Prostate gland (tissue), 2 donors: ENCODE measurements at regions of chr20 and their contacts with region 1.

Region 1: GRCh38 chr20:32336918-32337347 is 21.2 kb upstream of the ASXL1 start:
- DNase-seq: no peak
- H3K4me3 ChIP-seq: no peak overlapping the region
- H3K27ac ChIP-seq: no peak overlapping the region
- H3K4me1 ChIP-seq: no peaks in the 10 kb centered on the region
- H3K27me3 ChIP-seq: no peaks in the 10 kb centered on the region
- CTCF ChIP-seq: peak in 3 of 4 experiments; percentile 31 to 61 (median 54)
- POLR2A ChIP-seq: no peak

Region 2: GRCh38 chr20:31842471-31843157 is 494.3 kb before region 1 on chr20:
- intact Hi-C with region 1: no loop called
- DNase-seq: no peak
- H3K4me3 ChIP-seq: no peak overlapping the region
- H3K27ac ChIP-seq: peak overlapping the region in 1 of 2 donors; percentile 5
- H3K4me1 ChIP-seq: no peaks in the 10 kb centered on the region
- H3K27me3 ChIP-seq: no peaks in the 10 kb centered on the region
- CTCF ChIP-seq: no peak
- POLR2A ChIP-seq: no peak

Region 3: DNA sequence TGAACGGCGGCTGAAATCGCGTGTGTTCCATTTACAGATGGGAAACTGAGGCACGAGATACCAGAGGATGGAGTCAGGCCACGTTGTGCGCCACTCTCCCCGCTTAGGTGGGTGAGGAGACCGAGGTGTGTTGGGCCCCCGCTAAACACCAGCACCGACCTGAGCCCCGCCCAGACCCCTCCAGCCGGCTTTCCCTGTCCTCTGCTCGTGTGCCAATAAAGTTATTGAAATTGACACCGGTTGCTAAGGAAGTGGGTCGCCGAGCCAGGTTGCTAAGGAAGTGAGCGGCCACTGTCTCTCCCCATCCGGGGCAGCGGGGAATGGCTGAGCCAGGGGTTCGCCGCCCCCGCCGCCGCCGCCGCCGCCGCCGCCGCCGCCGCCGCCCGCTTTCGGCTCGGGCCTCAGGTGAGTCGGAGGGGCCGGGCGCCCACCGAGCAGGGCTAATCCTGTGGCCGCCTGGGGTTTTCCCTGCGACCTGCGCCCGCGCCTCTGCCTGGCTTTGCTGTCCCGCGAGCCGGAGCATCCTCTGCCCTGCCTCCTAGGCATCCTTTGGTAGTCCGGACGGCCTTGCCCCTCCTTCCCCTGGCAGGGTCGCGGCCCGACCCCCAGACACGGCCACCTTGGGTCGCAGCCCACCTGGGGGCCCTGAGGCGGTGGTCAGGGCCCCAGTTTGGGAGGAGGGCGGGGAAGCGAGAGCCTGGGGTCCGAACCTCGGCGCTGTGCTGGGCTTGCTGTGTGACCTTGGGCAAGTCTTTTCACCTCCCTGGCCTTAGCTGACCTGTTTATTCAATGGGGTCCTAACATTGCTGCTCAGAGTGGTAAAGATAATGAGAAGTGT is 59.4 kb before region 1 on chr20 and contains the start of gene KIF3B:
- intact Hi-C with region 1: no loop called
- DNase-seq: peak; percentile 84
- H3K4me3 ChIP-seq: peak within 1 kb of the TSS; percentile 81 to 94
- H3K27ac ChIP-seq: peak within 1 kb of the TSS; percentile 61 to 68
- H3K4me1 ChIP-seq: peaks cover 4% of the 10 kb centered on the region
- H3K27me3 ChIP-seq: no peaks in the 10 kb centered on the region
- CTCF ChIP-seq: no peak
- POLR2A ChIP-seq: peak; percentile 38
- total RNA-seq, gene KIF3B: 22.6 to 23.5 TPM

Region 4: DNA sequence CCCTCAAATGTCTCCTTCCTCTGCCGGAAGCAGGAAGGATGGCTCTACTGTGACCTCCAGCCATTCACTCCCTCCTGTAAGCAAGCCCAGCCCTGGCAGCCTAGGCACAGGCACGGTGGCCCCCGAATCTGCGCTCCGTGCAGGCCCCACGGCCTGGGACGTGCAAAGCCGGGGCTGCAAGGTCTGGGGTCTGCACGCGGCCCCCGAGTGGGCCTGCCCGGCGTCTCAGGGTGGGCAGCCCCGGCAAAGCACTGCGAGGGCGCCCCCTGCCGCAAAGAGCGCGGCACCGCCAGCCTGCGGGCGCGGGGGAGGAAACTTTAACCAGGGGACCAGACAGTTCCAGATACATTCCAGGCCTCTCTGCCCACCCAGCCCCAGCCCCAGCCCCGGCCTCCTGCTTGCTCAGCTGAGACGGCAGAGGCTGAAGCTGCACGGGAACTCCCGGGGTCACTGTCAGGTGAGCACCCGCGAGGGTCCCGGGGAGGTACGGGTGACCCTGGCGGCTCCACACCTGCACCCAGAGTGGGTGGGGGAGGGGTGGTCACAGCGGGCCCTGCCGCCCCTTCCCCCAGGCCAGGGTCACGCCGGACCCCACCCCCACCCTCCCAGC is 120.0 kb after region 1 on chr20:
- intact Hi-C with region 1: loop called (anchors 5 kb)
- DNase-seq: no peak
- H3K4me3 ChIP-seq: peak overlapping the region; percentile 18 to 41
- H3K27ac ChIP-seq: no peak overlapping the region
- H3K4me1 ChIP-seq: peaks cover 9% of the 10 kb centered on the region
- H3K27me3 ChIP-seq: no peaks in the 10 kb centered on the region
- CTCF ChIP-seq: peak; percentile 28 to 73 (median 68)
- POLR2A ChIP-seq: no peak

Region 5: DNA sequence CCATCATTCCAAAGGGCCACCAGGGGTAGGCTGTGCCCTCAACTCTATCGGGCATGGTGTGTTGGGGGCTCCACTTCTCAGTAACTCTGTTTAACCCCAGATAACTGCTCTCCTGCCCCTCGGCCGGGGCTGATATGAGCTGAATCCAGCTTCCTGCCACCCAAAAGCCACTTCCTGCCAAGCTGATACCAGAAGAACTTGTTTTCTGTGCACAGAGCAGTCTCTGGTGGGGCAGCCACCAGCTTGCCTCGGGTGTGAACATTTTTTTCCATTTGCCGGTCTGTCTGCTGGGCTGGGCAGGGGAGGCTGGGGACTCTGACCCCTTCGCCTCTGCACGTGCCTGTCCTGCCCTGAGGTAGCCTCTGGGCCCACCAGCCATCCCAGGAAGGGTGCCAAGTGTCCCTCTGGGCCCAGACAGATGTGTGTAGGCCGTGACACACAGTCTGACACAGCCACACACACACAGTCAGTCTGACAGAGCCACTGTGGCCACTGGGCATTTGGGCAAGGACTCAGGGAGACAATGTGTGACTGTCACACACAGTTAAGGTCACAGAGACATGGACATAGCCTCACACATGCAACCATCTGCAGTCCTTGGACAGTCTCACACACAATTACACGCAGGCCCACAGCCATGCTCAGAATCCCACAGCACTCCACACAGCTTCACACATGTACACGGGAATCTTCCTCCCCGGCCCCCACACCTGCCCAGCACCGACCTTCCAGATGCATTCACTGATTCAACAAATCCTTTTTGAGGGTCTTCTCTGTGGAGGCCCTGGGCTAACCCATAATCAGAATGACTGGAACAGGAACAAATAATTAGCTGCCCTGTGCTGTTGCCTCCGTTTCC is 203.1 kb after region 1 on chr20:
- intact Hi-C with region 1: no loop called
- DNase-seq: no peak
- H3K4me3 ChIP-seq: no peak overlapping the region
- H3K27ac ChIP-seq: no peak overlapping the region
- H3K4me1 ChIP-seq: no peaks in the 10 kb centered on the region
- H3K27me3 ChIP-seq: no peaks in the 10 kb centered on the region
- CTCF ChIP-seq: no peak
- POLR2A ChIP-seq: no peak

Region 6: GRCh38 chr20:32652739-32653526 is 316.0 kb after region 1 on chr20:
- intact Hi-C with region 1: loop called (anchors 10 kb)
- DNase-seq: peak; percentile 70
- H3K4me3 ChIP-seq: no peak overlapping the region
- H3K27ac ChIP-seq: no peak overlapping the region
- H3K4me1 ChIP-seq: no peaks in the 10 kb centered on the region
- H3K27me3 ChIP-seq: no peaks in the 10 kb centered on the region
- CTCF ChIP-seq: peak; percentile 95 to 97 (median 96)
- POLR2A ChIP-seq: no peak